PC-9 (cell line): ENCODE measurements at regions of chr6 and their contacts with region 1.

Region 1: DNA sequence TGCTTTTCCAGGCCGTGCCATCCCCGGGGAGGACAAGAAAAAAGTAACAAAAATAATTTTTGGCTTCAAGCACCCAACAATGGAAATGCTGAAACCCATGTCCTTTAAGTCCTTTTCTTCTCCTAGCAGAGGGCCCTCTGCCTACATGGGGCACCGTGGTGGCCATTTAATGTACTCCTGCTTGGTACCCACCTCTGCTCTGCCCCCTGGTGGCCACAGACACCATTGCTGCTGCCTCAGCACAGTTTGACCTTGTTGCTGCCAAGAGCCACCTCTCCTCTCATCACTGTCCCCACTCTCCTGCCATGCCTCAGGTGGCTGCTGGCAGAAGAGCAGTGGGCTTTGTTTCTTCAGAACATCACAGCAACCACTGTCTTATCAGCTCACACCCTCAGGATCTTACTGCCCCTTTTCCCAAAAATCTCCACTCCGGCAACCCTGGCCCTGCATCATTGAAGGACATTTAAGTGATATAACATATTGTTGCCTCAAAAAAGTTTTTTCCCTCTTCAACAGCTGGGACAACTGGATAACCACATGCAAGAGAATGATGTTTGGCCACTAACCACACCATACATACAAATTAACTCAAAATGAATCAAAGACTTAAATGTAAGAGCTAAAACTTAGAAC is 12.9 kb upstream of the ARMC2 start:
- DNase-seq: peak; percentile 61 to 78
- H3K4me3 ChIP-seq: no peak overlapping the region
- H3K27ac ChIP-seq: no peak overlapping the region
- H3K4me1 ChIP-seq: no peaks in the 10 kb centered on the region
- H3K27me3 ChIP-seq: no peaks in the 10 kb centered on the region
- CTCF ChIP-seq: peak; percentile 95

Region 2: GRCh38 chr6:108896111-108896661 is 60.9 kb after region 1 on chr6:
- CTCF ChIA-PET with region 1: no interaction called
- POLR2A ChIA-PET with region 1: no interaction called
- intact Hi-C with region 1: loop called (anchors 5 kb)
- DNase-seq: peak in 1 of 2 experiments; percentile 50
- H3K4me3 ChIP-seq: no peak overlapping the region
- H3K27ac ChIP-seq: peak overlapping the region; percentile 57
- H3K4me1 ChIP-seq: peaks cover 14% of the 10 kb centered on the region
- H3K27me3 ChIP-seq: no peaks in the 10 kb centered on the region
- CTCF ChIP-seq: no peak